Mammary epithelial cell (primary cell): ENCODE measurements at regions of chr11 and their contacts with region 1.

Region 1: DNA sequence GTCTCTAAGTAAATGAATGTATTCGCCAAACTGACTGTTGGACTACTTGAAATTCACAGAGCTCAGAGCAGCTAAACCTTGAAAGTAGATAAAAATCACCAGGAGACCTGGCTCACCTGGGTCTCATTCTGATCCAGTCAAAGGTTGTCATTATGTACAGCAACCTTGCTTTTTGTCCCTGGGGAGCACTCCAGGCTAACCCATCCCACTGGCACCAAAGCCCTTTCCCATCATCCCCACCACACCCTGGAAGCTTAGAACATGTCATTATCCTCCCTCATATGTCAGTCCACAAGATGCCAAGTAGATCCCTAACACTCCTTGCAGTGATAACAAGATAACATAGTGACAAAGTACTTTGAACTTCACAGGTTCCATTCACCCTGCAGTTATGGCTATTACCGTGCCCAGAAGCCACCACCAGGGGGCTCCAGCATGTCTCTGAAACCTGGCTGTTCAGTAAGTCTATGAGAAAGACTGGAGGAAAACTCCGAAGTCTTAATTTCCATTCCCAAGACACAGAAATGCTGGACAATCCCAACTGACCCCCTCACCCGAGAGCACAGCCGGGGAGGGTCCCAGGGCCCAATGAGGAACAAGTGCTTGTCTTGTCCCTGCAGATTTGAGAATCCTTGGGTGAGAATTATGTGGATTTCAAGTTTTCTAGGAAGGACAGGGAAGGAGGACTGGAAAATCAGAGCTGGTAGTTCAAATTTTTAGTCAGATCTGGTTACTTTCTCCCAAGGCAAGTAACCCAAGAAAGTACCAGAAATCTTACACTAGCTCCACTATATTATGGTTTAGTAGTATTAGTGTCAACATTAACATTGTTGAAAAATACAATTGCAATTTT is 43.0 kb upstream of the USP47 start:
- DNase-seq: no peak
- H3K4me3 ChIP-seq: no peak overlapping the region
- H3K27ac ChIP-seq: no peak overlapping the region
- H3K4me1 ChIP-seq: no peaks in the 10 kb centered on the region
- H3K27me3 ChIP-seq: peaks cover 2% of the 10 kb centered on the region
- CTCF ChIP-seq: peak; percentile 88 to 96

Region 2: GRCh38 chr11:11708256-11708655 is 90.6 kb before region 1 on chr11:
- CTCF ChIA-PET with region 1: interaction called, 10 read pairs
- dilution Hi-C with region 1: no loop called
- in situ Hi-C with region 1: no loop called
- intact Hi-C with region 1: no loop called
- DNase-seq: no peak
- H3K4me3 ChIP-seq: no peak overlapping the region
- H3K27ac ChIP-seq: no peak overlapping the region
- H3K4me1 ChIP-seq: no peaks in the 10 kb centered on the region
- H3K27me3 ChIP-seq: peaks cover 2% of the 10 kb centered on the region
- CTCF ChIP-seq: no peak

Region 3: GRCh38 chr11:11770296-11770695 is 28.5 kb before region 1 on chr11:
- CTCF ChIA-PET with region 1: no interaction called
- dilution Hi-C with region 1: no loop called
- in situ Hi-C with region 1: no loop called
- intact Hi-C with region 1: no loop called
- DNase-seq: no peak
- H3K4me3 ChIP-seq: no peak overlapping the region
- H3K27ac ChIP-seq: no peak overlapping the region
- H3K4me1 ChIP-seq: no peaks in the 10 kb centered on the region
- H3K27me3 ChIP-seq: peaks cover 3% of the 10 kb centered on the region
- CTCF ChIP-seq: no peak

Region 4: DNA sequence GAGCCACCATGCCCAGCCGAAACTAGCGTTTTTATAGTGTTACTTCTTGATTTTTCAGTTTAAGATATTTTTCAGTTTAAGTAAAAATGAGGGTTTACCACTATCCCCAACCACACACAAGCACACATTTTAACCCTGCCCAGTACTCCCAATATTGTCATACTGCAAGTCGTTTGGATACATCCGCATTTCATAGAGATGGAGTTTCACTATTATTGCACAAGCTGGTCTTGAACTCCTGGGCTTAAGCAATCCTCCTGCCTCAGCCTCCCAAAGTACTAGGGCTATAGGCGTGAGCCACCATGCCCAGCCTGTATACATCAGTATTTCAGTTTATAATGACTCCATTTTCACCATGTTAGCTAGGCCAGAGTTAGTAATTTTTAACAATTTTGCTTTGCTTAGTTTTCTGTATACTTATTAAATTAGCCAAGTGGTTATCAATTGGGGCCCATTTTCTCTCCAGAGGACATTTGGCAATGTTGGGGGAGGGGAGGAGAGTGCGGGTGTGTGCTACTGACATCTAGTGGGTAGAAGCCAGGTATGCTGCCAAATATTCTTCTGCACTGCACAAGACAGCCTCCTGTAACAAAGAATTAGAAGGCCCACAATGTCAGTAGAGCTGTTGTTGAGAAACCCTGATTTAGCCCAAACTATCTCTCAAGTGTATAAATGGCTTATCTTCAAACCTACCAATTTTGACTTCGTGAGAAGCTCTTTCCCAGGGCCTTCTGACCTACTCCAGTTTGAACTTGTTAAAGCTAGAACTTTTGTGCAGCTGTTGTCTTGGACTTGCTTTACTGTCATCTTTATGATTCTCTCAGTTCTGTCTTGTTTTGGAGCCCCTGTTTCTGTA is 50.3 kb after region 1 on chr11:
- CTCF ChIA-PET with region 1: no interaction called
- dilution Hi-C with region 1: no loop called
- in situ Hi-C with region 1: no loop called
- intact Hi-C with region 1: loop called (anchors 1 kb)
- DNase-seq: peak; percentile 62
- H3K4me3 ChIP-seq: peak overlapping the region in 1 of 3 experiments; percentile 9
- H3K27ac ChIP-seq: peak overlapping the region; percentile 23
- H3K4me1 ChIP-seq: peaks cover 26% of the 10 kb centered on the region
- H3K27me3 ChIP-seq: no peaks in the 10 kb centered on the region
- CTCF ChIP-seq: peak; percentile 87 to 92

Region 5: DNA sequence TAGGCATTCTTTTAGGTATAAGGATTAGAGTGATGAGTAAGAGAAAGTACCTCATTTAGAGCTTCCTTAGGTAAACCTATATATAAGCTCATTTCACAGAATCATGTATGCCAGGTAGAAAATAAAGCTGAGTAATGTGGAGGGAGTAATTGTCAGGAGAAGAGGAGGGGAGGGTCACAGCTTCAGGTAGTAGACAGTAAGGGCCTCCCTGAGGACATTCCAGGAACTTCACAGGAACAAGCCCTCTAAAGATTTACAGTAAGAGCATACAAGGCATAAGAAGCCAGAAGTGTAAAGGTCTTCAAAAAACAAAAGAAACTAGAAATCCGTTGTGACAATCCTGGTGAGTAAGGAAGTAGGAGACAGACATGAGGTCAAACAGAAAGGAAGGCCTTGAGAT is 100.6 kb after region 1 on chr11:
- CTCF ChIA-PET with region 1: no interaction called
- dilution Hi-C with region 1: no loop called
- in situ Hi-C with region 1: no loop called
- intact Hi-C with region 1: loop called (anchors 1 kb)
- DNase-seq: no peak
- H3K4me3 ChIP-seq: no peak overlapping the region
- H3K27ac ChIP-seq: no peak overlapping the region
- H3K4me1 ChIP-seq: no peaks in the 10 kb centered on the region
- H3K27me3 ChIP-seq: no peaks in the 10 kb centered on the region
- CTCF ChIP-seq: peak; percentile 13 to 17

Region 6: GRCh38 chr11:12281571-12282478 is 483.0 kb after region 1 on chr11:
- CTCF ChIA-PET with region 1: no interaction called
- dilution Hi-C with region 1: no loop called
- in situ Hi-C with region 1: no loop called
- intact Hi-C with region 1: loop called (anchors 2 kb)
- DNase-seq: peak; percentile 67
- H3K4me3 ChIP-seq: no peak overlapping the region
- H3K27ac ChIP-seq: no peak overlapping the region
- H3K4me1 ChIP-seq: peaks cover 44% of the 10 kb centered on the region
- H3K27me3 ChIP-seq: no peaks in the 10 kb centered on the region
- CTCF ChIP-seq: peak; percentile 93 to 96